ENCODE measurements at regions of chr5 and their contacts with region 1.

Region 1: DNA sequence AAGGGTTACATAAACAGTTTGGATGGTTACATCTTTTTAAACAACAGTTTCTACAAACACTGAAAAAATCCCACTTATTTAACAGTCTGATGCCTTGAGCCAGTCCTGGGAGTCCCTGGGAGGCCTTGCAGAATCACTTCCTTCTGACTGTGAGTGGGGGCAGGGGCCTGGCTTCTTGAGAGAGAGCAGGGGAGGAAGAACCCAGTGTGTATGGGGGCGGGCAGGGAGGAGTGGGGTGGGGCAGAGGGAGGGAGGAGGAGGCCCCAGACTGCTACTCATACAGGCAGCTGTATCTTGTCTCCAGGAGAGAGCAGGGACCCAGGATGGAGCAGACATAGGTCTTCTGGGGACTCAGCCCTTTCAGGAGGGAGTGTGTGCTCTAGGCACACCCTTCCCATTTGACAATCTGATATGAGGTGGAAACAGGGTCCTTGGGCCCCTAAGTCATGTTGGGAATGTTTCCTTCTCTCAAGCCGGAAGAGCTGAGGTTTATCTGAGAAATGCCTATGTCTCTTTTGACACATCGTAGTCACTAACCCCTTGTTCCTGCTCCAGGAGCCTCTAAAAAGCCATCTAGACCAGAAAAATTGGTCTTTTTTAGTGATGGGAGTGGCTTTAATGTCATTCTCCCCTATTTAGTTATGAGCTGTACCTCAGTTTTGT is 52.8 kb downstream of the IRF1 start:
- DNase-seq: peak; percentile 78
- ATAC-seq: peak; percentile 76 to 82

Region 2: GRCh38 chr5:132476876-132477781 is 39.4 kb after region 1 on chr5:
- intact Hi-C with region 1: loop called in 1 of 2 experiments (anchors 5 kb)
- DNase-seq: peak; percentile 39
- ATAC-seq: no peak